ENCODE measurements at regions of chr12 and their contacts with region 1.

Region 1: DNA sequence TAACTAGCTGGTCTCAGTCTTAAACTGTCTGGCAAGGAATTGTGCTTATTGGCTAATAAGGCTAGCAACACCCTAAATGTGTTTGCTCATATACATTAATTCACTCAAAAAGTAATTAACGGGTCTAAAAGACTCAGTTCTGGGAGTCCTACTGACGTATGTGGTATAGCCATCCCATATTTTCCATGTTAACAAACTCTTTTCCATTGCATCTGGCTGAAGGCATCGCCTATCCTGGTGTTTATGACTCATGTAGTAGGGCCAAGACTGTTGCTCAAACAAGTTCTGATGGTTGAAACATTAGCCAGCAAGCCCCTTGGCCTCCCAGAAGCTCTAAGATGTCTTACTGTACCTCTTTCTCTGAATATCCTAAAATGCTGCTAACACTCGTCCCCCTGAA is 98.5 kb downstream of the PHLDA1 start:
- DNase-seq: no peak
- ATAC-seq: peak in 1 of 2 donors; percentile 31

Region 2: GRCh38 chr12:75560167-75560566 is 372.9 kb before region 1 on chr12:
- intact Hi-C with region 1: loop called in 1 of 2 experiments (anchors 10 kb)
- DNase-seq: no peak
- ATAC-seq: peak; percentile 69 to 77